ENCODE measurements at regions of chr9 and their contacts with region 1.

Region 1: DNA sequence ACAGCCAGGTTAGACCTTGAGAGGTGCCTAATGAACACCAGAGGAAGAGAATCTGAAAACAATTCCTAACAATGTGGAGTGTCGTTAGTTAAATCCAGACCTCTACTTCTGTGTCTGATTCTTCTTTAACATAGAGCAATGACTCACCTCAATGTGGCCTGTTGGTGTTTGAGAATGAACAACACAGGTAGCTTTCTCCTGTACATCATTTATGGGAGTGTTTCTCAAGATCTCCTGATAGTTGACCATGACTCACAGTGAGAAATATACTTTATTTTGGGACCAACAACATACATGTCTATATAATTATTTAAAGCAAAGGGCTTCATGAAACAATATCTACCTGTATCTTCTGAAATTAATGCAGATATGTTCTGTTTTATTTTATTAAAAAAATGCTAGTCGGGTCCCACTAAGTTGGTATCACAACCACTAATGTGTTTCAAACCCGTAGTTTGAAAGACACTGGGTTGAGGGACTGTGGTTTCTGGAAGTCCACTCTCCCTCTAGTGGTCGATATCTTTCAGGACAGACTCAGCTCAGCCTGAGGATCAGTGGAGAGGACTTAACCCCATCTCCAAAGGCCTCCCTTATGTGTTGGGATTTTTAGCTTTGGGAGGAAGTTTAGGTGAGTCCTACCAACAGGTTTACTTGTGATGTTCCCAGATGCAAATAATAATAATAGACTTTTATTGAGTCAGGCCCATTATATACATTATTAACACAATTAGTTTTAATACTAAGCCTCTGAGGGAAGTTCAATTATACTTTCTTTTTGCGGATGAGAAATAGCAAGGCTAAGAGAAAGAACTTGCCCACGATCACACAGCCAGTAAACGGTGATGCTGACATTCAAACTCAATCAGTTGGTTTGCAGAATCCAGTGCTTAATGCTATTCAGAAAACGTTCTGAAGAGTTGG is 70.0 kb upstream of the KLF9 start:
- DNase-seq: no peak
- H3K4me3 ChIP-seq: no peak overlapping the region
- H3K27ac ChIP-seq: peak overlapping the region; percentile 40 to 62
- H3K4me1 ChIP-seq: peaks cover 22 to 41% of the 10 kb centered on the region in 2 donors
- H3K27me3 ChIP-seq: no peaks in the 10 kb centered on the region
- CTCF ChIP-seq: peak; percentile 67 to 73 (median 69)

Region 2: DNA sequence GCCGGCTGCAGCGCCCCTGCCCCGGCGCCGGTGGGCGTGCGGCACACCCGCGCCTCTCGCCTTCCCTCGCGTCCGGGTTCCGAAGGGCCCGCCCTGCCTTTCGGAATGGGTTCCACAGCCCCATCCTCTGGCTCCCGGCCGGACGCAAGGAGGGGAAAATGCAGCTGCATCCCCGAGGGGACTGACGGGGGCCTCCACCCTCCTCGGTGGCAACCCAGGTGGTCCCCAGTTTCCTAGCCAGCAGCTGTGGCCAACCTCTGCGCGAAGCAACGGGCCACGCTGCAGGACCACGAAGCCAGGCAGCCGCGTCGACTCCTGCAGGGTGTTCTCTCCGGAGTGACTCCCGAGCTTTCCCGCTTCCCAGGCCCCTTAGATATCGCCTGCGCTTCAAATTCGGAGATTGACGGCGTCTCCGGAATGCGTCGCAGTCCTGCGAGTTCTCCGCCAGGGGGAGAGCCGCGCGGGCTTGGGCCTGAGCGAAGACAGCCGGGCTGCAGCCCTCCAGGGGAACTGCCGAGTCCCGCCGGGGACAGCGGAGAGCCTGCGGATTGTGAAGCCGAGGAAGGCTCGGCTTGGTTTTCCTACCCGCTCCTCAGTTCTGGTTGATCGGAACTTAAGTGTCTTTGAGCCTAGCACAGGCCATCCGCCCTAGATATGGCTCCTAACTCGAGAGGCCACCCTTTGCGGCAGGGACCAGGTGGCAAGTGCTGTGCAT is 811.7 kb before region 1 on chr9:
- intact Hi-C with region 1: loop called (anchors 10 kb)
- DNase-seq: peak; percentile 11 to 89
- H3K4me3 ChIP-seq: peak overlapping the region; percentile 76 to 95
- H3K27ac ChIP-seq: peak overlapping the region; percentile 9 to 82
- H3K4me1 ChIP-seq: peaks cover 0 to 11% of the 10 kb centered on the region in 2 donors
- H3K27me3 ChIP-seq: no peaks in the 10 kb centered on the region
- CTCF ChIP-seq: peak; percentile 66 to 88 (median 88)

Region 3: DNA sequence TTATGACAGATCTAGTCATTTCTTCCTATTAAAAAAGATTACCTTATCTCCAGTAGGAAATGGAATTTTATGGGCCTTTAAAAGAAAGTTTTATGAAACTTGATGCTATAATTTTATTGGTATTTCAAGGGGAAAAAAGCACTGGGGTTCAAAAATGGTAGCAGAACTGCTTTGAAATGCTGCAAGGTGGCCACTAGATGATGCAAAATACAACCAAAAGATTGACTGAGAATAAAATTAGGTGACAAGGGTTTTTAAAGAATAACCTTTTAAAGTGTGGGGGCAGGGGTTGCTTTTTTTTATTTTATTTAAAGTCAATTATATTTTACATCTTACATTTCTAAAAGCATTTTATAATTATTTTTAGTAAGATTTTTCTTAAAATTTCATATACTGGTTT is 131.7 kb before region 1 on chr9:
- intact Hi-C with region 1: loop called (anchors 5 kb)
- DNase-seq: no peak
- H3K4me3 ChIP-seq: no peak overlapping the region
- H3K27ac ChIP-seq: peak overlapping the region in 1 of 2 donors; percentile 14
- H3K4me1 ChIP-seq: no peaks in the 10 kb centered on the region
- H3K27me3 ChIP-seq: no peaks in the 10 kb centered on the region
- CTCF ChIP-seq: peak; percentile 44 to 67 (median 61)

Region 4: DNA sequence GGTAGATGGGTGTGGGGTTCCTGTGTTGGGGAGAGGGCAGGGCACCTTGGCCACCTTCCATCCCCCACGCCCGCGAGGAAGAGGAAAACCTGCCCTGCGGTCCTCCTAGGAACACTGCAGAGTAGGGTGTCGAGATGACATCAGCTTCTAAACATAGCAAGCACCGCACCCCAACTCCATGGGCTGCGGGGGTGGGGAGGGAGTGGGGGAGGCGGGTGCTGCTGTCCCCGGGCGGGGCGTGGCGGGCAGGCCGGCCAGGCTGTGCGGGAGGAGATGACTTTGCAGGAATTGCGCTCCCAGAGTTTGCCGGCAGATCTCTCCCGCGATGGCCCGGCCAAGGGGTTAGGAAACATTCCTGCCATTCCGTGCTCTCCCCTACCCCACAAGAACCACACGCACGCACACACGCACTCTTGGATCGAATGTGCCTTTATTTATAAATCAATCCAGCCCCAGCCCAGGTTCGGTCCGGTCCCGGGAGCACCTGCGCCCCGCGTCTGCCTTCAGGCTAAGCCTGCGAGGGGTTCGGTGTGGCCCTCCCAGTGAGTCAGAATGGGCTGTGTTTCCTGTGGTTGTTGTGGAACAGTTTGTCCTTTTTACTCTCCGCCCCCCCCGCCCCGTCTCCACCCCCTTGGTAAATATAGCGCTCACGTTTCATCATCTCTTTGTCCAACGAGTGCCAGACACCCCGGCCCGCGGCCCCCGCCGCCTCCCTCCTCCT is 64.8 kb before region 1 on chr9:
- intact Hi-C with region 1: loop called (anchors 1 kb)
- DNase-seq: peak; percentile 93 to 98
- H3K4me3 ChIP-seq: peak overlapping the region; percentile 54 to 75
- H3K27ac ChIP-seq: peak overlapping the region; percentile 100
- H3K4me1 ChIP-seq: peaks cover 14 to 43% of the 10 kb centered on the region in 2 donors
- H3K27me3 ChIP-seq: no peaks in the 10 kb centered on the region
- CTCF ChIP-seq: peak in 2 of 3 experiments; percentile 9 to 17

Region 5: GRCh38 chr9:70438341-70438928 is 46.0 kb before region 1 on chr9:
- intact Hi-C with region 1: loop called (anchors 5 kb)
- DNase-seq: peak in 1 of 2 donors; percentile 88
- H3K4me3 ChIP-seq: no peak overlapping the region
- H3K27ac ChIP-seq: peak overlapping the region; percentile 23 to 53
- H3K4me1 ChIP-seq: peaks cover 5 to 11% of the 10 kb centered on the region in 2 donors
- H3K27me3 ChIP-seq: no peaks in the 10 kb centered on the region
- CTCF ChIP-seq: no peak

Region 6: DNA sequence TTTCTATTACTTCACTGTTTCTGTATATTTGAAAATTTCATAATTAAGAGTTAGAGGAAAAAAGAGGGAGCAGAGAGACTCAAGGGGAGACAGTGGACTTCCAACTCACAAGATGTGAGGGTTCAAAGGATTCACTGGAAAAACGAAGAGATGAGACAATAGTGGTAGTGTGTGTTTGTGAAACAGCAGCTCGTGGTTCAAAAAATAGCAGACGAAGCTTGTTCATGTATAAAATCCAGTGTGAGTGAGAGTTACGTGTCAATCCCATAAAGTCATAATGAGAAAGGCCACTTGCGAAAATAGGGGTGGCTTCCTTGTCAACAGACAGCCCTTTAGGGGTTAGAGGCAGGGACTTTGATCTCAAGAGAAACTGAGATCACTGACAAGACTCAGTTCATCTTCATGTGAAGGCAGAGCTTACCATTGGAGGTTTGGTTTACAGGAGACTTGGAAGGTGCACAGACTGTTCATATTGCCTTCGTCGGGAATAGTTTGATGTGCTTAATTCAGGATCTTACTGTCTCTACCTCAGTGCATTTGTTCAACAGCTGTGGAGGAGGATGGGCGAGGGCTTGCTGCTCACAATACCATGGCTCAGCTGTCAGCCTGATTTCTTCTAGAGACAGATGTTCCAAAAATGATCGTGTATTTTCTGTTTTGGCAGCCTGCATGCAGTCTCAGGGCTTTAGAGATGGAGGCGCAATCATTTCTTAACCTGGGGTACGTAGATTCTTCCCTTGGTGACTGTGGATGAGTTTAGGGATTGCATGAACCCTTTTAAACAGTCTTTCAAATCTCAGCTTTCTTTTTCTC is 35.6 kb after region 1 on chr9:
- intact Hi-C with region 1: no loop called
- DNase-seq: no peak
- H3K4me3 ChIP-seq: no peak overlapping the region
- H3K27ac ChIP-seq: no peak overlapping the region
- H3K4me1 ChIP-seq: no peaks in the 10 kb centered on the region
- H3K27me3 ChIP-seq: no peaks in the 10 kb centered on the region
- CTCF ChIP-seq: no peak

Region 7: DNA sequence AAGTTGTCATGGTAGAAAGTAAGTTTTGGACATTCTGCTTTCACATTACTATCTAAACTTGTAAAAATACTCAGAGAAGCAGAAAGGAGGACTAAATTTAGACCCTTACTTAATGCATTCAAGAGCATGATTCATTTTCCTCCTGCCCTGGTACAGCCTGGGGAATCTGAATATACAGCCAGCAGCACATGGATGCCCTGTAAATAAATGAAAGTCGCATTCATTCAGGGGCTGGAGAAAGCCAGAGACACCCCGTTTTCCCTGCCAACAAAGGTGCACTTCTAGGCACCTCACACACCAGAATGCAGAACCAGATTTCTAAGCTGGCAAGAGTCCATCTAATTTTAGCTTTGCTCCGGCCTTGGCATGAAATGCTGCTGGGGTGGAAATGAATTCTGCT is 102.7 kb after region 1 on chr9:
- intact Hi-C with region 1: loop called (anchors 2 kb)
- DNase-seq: peak in 1 of 2 donors; percentile 78
- H3K4me3 ChIP-seq: no peak overlapping the region
- H3K27ac ChIP-seq: peak overlapping the region; percentile 91 to 93
- H3K4me1 ChIP-seq: peaks cover 10 to 54% of the 10 kb centered on the region in 2 donors
- H3K27me3 ChIP-seq: no peaks in the 10 kb centered on the region
- CTCF ChIP-seq: peak in 1 of 3 experiments; percentile 6